MCF 10A (cell line): ENCODE measurements at regions of chr6 and their contacts with region 1.

Region 1: DNA sequence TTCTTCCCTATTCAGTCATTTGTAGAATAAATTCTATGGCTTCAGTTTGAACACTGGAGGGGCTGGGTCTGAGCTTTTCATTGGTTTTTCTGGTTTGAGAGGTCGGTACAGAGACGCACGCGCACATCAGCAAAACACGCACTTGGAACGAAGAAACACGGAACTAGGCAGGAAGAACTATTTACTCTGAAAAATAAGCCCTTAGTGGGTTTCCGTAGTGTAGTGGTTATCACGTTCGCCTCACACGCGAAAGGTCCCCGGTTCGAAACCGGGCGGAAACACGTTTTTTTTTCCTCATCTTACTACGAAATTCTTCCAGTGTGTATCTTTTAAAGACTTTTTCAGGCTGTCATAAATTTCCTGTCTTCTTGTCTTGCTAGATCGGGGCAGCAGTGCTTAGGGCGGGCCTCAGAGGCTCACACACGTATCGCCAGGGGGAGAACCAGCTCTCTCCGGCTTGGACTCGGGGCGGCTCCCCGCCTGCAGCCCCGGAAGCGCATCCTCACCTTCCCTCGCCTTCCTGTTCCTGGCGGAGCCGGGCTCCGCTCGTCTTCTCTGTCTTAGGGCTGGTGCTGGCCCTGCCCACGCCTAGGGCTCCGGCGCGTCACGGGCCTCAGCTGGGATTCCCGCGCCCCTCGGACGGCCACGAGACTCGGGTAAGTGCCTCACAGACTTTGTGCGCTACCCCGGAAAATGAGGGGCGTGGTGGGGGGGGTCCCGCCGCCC is at the start of gene HMGN4:
- DNase-seq: peak; percentile 89
- H3K4me3 Mint-ChIP-seq: peak within 1 kb of the TSS; percentile 84
- H3K27ac Mint-ChIP-seq: peak within 1 kb of the TSS; percentile 98
- H3K4me1 Mint-ChIP-seq: peaks cover 23% of the 10 kb centered on the region
- H3K27me3 Mint-ChIP-seq: no peaks in the 10 kb centered on the region
- CTCF ChIP-seq: no peak
- total RNA-seq, gene HMGN4: 71.7 and 75.4 TPM in 2 replicates

Region 2: GRCh38 chr6:25835442-25836283 is 702.3 kb before region 1 on chr6:
- CTCF ChIA-PET with region 1: no interaction called
- POLR2A ChIA-PET with region 1: no interaction called
- intact Hi-C with region 1: no loop called
- DNase-seq: no peak
- H3K4me3 Mint-ChIP-seq: no peak overlapping the region
- H3K27ac Mint-ChIP-seq: no peak overlapping the region
- H3K4me1 Mint-ChIP-seq: no peaks in the 10 kb centered on the region
- H3K27me3 Mint-ChIP-seq: peaks cover 34% of the 10 kb centered on the region
- CTCF ChIP-seq: no peak

Region 3: DNA sequence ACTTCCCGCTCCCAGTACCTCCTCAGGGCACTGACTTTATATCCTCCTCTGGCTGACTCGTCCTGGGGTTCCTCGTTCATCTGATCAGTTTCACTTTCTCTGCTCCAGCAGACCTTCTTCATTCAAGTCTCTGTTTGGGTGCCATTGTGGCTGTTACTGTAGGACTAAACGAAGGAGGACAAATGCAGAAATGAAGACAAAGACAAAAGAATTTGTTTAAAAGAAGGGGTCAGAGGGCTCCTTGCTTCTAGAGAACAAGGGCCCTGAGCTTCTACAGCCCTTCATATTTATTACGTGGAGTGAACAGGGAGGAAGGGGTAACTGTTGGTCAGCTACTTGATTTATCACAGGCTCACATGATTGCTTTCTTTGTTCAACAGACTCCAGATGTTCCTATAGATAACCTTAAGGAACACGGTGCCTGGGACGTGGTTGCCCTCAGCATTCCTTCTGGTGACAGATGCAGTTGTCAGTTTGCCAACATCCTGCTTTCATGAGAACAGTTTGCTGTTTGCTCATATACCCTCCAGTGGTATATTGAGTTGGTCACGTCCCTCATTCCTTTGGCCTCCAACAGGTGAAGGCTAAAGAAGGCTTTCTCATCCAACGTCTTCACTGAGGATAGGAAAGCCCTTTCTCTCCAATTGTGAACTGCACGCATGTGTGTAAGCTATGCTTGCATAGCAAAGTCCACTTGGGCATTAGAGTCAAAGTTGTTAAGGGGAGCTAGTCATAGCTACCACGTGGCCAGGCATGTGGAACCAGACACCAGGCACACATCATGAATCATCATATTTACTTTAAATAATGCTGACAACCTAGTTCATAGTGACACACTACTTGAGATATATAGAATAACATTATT is 242.1 kb before region 1 on chr6:
- CTCF ChIA-PET with region 1: no interaction called
- POLR2A ChIA-PET with region 1: interaction called, 12 read pairs
- intact Hi-C with region 1: no loop called
- DNase-seq: peak; percentile 87
- H3K4me3 Mint-ChIP-seq: peak overlapping the region; percentile 63
- H3K27ac Mint-ChIP-seq: peak overlapping the region; percentile 81
- H3K4me1 Mint-ChIP-seq: peaks cover 22% of the 10 kb centered on the region
- H3K27me3 Mint-ChIP-seq: no peaks in the 10 kb centered on the region
- CTCF ChIP-seq: no peak

Region 4: GRCh38 chr6:26322645-26323482 is 215.1 kb before region 1 on chr6:
- CTCF ChIA-PET with region 1: no interaction called
- POLR2A ChIA-PET with region 1: interaction called, 12 read pairs
- intact Hi-C with region 1: no loop called
- DNase-seq: peak; percentile 85
- H3K4me3 Mint-ChIP-seq: peak overlapping the region; percentile 76
- H3K27ac Mint-ChIP-seq: peak overlapping the region; percentile 75
- H3K4me1 Mint-ChIP-seq: peaks cover 7% of the 10 kb centered on the region
- H3K27me3 Mint-ChIP-seq: no peaks in the 10 kb centered on the region
- CTCF ChIP-seq: no peak

Region 5: DNA sequence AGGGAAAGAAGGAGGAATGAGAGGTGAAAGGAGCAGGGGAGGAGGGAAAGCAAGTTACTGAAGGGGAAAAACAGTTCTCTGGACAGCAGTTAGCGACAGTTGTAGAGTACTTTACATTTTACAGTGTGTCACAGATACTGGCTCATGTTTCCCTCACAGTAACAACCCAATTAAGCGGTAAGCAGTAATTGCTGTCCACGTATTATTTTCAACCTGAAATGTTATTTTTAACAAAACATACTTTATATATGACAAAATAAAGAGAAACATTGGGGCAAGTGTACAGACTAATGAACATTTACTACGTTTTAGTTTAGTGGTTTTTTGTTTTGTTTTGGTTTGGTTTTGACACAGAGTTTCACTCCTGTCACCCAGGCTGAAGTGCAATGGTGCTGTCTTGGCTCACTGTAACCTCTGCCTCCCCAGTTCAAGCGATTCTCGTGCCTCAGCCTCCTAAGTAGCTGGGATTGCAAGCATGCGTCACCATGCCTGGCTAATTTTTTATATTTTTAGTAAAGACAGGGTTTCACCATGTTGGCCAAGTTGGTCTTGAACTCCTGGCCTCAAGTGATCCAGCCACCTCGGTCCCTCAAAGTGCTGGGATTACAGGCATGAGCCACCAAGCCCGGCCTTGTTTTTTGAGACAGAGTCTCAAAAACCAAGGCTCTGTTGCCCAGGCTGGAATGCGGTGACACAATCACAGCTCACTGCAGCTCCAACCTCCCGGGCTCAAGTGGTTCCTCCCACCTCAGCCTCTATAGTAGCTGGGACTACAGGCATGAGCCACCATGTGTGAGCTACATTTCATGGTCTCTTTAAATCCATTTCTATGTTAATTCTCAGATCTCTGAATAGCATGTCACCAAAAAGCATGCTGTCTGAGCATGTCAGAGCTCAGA is 195.7 kb before region 1 on chr6:
- CTCF ChIA-PET with region 1: interaction called, 5 read pairs
- POLR2A ChIA-PET with region 1: interaction called, 9 read pairs
- intact Hi-C with region 1: loop called (anchors 5 kb)
- DNase-seq: peak; percentile 45
- H3K4me3 Mint-ChIP-seq: peak overlapping the region; percentile 45
- H3K27ac Mint-ChIP-seq: no peak overlapping the region
- H3K4me1 Mint-ChIP-seq: peaks cover 7% of the 10 kb centered on the region
- H3K27me3 Mint-ChIP-seq: no peaks in the 10 kb centered on the region
- CTCF ChIP-seq: no peak

Region 6: GRCh38 chr6:26473758-26474438 is 64.1 kb before region 1 on chr6:
- CTCF ChIA-PET with region 1: no interaction called
- POLR2A ChIA-PET with region 1: interaction called, 17 read pairs
- intact Hi-C with region 1: loop called (anchors 5 kb)
- DNase-seq: peak; percentile 94
- H3K4me3 Mint-ChIP-seq: peak overlapping the region; percentile 92
- H3K27ac Mint-ChIP-seq: peak overlapping the region; percentile 99
- H3K4me1 Mint-ChIP-seq: peaks cover 21% of the 10 kb centered on the region
- H3K27me3 Mint-ChIP-seq: no peaks in the 10 kb centered on the region
- CTCF ChIP-seq: no peak

Region 7: DNA sequence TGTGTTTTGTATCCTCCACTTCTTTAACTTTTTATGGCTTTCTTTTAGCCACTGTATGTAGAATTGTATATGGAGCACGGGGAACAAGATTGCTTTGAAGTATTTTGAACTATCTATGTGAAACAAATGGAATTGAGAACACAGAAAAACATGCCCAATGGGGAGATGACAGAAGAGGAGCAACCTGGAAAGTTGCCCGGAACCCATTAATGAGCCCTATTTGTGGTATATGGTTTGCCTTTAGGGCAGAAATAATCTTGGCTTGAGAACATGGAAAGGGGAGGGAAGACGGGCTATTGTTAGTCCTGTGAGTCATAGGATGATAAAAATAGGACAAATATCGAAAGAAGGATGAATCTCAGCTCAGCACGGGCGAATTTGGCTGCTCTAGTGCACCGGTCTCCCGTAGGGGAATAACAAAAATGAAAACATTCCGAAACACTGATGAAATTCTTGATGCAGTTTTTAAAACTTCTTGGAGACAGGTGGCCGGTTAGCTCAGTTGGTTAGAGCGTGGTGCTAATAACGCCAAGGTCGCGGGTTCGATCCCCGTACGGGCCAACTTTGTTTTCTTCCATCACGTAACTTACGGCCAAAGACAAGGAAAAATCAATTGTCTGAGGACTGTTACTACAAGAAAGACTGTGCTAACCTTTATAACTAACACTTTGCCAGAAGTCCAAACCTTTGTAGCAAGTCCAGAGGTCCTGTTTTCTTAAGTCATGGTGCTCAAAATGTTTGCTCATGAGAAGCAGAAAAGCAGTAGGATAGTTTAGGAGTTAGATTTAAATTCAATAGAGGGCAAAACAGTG is 15.8 kb after region 1 on chr6:
- CTCF ChIA-PET with region 1: interaction called, 4 read pairs
- POLR2A ChIA-PET with region 1: interaction called, 76 read pairs
- intact Hi-C with region 1: loop called (anchors 1 kb)
- DNase-seq: peak; percentile 95
- H3K4me3 Mint-ChIP-seq: no peak overlapping the region
- H3K27ac Mint-ChIP-seq: no peak overlapping the region
- H3K4me1 Mint-ChIP-seq: peaks cover 21% of the 10 kb centered on the region
- H3K27me3 Mint-ChIP-seq: no peaks in the 10 kb centered on the region
- CTCF ChIP-seq: no peak

Region 8: DNA sequence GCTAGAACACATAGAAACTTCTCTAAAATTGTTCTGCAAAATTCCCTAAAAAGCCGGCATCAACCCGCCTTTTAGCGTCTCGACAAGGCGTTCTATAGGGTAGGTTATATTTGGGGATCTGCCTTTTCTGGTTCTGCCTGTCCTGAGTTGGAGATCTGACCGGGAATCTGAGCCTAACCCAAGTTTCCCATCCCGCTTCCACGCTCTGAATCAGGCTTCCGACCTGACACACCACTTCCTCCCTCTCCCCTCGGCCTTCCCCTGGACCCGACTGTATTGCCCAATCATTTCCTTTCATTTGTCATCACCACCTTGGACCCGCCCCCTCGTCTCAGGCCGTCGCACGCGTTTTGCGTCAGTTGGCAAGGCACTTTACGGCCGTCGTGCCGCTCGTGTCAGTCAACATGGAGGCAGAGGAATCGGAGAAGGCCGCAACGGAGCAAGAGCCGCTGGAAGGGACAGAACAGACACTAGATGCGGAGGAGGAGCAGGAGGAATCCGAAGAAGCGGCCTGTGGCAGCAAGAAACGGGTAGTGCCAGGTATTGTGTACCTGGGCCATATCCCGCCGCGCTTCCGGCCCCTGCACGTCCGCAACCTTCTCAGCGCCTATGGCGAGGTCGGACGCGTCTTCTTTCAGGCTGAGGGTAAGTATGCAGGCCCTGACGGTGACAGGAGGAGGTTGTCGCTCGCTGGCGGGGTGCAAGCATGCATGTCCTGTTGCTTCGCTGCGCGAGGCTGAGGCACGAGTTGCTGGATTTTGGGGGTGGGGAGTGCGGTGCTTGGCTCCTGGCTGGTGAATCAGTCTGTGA is 58.8 kb after region 1 on chr6 and contains the start of gene ABT1:
- CTCF ChIA-PET with region 1: interaction called, 6 read pairs
- POLR2A ChIA-PET with region 1: interaction called, 18 read pairs
- intact Hi-C with region 1: no loop called
- DNase-seq: peak; percentile 99
- H3K4me3 Mint-ChIP-seq: no peak within 1 kb of the TSS
- H3K27ac Mint-ChIP-seq: no peak within 1 kb of the TSS
- H3K4me1 Mint-ChIP-seq: peaks cover 6% of the 10 kb centered on the region
- H3K27me3 Mint-ChIP-seq: no peaks in the 10 kb centered on the region
- CTCF ChIP-seq: no peak
- total RNA-seq, gene ABT1: 11.9 and 12.9 TPM in 2 replicates